HCT116 (cell line): ENCODE measurements at regions of chr6 and their contacts with region 1.

Region 1: GRCh38 chr6:146857180-146857979 is 258.6 kb downstream of the ADGB start:
- DNase-seq: peak; percentile 43
- ATAC-seq: peak; percentile 98
- H3K4me3 ChIP-seq: peak overlapping the region in 1 of 2 experiments; percentile 27; a peak in 1 of 4 replicates
- H3K27ac ChIP-seq: no peak overlapping the region
- H3K4me1 ChIP-seq: peaks cover 0 to 5% of the 10 kb centered on the region in 2 experiments; a peak in 2 of 4 replicates
- H3K27me3 ChIP-seq: no peaks in the 10 kb centered on the region
- CTCF ChIP-seq: peak; percentile 64 to 96 (median 91)
- POLR2A ChIP-seq: no peak
- RAD21 ChIP-seq: peak; percentile 96

Region 2: GRCh38 chr6:146369866-146370265 is 487.5 kb before region 1 on chr6:
- CTCF ChIA-PET with region 1: no interaction called
- POLR2A ChIA-PET with region 1: no interaction called
- RAD21 ChIA-PET with region 1: no interaction called
- intact Hi-C with region 1: no loop called
- DNase-seq: no peak
- ATAC-seq: no peak
- H3K4me3 ChIP-seq: no peak overlapping the region
- H3K27ac ChIP-seq: no peak overlapping the region
- H3K4me1 ChIP-seq: no peaks in the 10 kb centered on the region
- H3K27me3 ChIP-seq: no peaks in the 10 kb centered on the region
- CTCF ChIP-seq: no peak
- POLR2A ChIP-seq: no peak
- RAD21 ChIP-seq: no peak

Region 3: GRCh38 chr6:147222160-147222838 is 364.9 kb after region 1 on chr6:
- CTCF ChIA-PET with region 1: no interaction called
- POLR2A ChIA-PET with region 1: no interaction called
- RAD21 ChIA-PET with region 1: no interaction called
- intact Hi-C with region 1: loop called (anchors 10 kb)
- DNase-seq: no peak
- ATAC-seq: peak; percentile 63; the same call in 1 of the 2 replicates
- H3K4me3 ChIP-seq: no peak overlapping the region
- H3K27ac ChIP-seq: no peak overlapping the region
- H3K4me1 ChIP-seq: no peaks in the 10 kb centered on the region
- H3K27me3 ChIP-seq: no peaks in the 10 kb centered on the region
- CTCF ChIP-seq: peak in 2 of 3 experiments; percentile 49 to 55; a peak in 4 of 6 replicates
- POLR2A ChIP-seq: no peak
- RAD21 ChIP-seq: peak; percentile 36

Region 4: DNA sequence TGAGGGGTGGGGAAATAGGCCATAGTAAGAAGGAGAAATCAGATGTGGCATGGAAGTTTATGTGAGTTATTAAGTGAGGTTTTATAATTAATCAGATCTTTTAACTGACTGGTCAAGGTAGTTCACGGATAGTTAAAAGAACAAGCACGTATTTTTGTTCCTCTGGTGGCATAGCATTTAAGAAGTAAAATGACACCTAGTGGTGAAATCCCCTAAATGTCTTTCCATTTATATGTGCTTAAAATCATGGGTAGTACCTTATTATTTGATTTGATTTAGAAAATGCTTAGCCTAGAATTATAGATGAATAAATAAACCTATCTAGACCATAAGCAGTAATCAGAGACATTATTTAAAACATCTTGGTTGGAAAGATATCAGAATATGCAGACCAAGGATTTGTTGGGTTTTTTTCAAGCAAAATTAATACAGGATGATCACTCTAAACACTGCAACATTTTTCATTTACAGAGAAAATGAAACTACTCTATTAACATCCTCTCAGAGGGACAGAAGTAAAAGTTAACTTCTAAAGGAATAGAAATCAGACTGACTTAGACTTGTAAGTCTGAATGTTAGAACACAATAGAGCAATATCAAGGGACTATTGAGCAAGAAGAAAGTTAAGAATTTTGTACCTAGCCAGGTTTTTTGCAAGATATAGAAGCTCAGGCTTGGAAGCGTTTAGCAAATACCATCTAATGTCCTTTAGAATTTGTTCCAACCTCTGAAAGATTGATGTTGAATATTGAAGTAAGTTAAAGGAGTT is 427.9 kb after region 1 on chr6:
- CTCF ChIA-PET with region 1: no interaction called
- POLR2A ChIA-PET with region 1: no interaction called
- RAD21 ChIA-PET with region 1: no interaction called
- intact Hi-C with region 1: loop called (anchors 2 kb)
- DNase-seq: peak; percentile 34
- ATAC-seq: peak; percentile 50; the same call in 1 of the 2 replicates
- H3K4me3 ChIP-seq: no peak overlapping the region
- H3K27ac ChIP-seq: no peak overlapping the region
- H3K4me1 ChIP-seq: peaks cover 2 to 10% of the 10 kb centered on the region in 2 experiments; a peak in 2 of 4 replicates
- H3K27me3 ChIP-seq: no peaks in the 10 kb centered on the region
- CTCF ChIP-seq: peak; percentile 30 to 61 (median 48); a peak in 4 of 6 replicates
- POLR2A ChIP-seq: no peak
- RAD21 ChIP-seq: peak; percentile 62

Region 5: DNA sequence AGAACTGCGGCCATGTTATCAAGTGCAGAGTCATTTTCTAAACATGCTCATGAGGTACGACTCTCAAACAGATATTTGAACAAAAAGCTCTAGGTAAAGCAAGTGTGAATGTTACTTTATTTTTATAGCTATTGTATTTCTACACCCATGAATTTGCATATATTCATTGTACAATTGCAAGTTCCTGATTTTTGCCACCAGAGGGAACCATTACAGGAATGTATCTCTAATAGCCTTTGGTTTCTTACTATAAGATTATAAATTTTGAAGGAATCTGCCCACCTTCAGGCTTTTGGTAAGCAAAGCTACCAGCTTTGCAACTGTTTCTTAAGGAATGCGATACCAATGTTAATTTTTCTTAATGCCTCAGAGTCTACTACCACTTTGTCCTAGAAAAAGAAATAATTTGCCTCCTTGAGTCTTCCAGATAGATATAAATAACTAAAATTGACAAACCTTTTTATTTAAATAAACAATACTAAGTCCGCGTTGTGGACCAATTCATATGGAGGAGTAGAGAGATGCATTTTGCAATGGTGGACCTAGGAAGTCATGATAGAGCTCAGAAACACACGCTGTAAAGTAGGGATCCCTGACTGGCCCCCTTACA is 525.7 kb after region 1 on chr6:
- CTCF ChIA-PET with region 1: no interaction called
- POLR2A ChIA-PET with region 1: no interaction called
- RAD21 ChIA-PET with region 1: no interaction called
- intact Hi-C with region 1: loop called (anchors 1 kb)
- DNase-seq: peak; percentile 13
- ATAC-seq: peak; percentile 69
- H3K4me3 ChIP-seq: no peak overlapping the region
- H3K27ac ChIP-seq: no peak overlapping the region
- H3K4me1 ChIP-seq: no peaks in the 10 kb centered on the region
- H3K27me3 ChIP-seq: no peaks in the 10 kb centered on the region
- CTCF ChIP-seq: peak; percentile 37 to 71 (median 50); a peak in 5 of 6 replicates
- POLR2A ChIP-seq: no peak
- RAD21 ChIP-seq: peak; percentile 30